GM12878 (cell line): ENCODE measurements at regions of chr3 and their contacts with region 1.

Region 1: GRCh38 chr3:114839476-114839875 is 307.6 kb downstream of the ZBTB20 start:
- DNase-seq: no peak
- ATAC-seq: no peak
- H3K4me3 ChIP-seq: no peak overlapping the region
- H3K27ac ChIP-seq: no peak overlapping the region
- H3K4me1 ChIP-seq: no peaks in the 10 kb centered on the region
- H3K27me3 ChIP-seq: no peaks in the 10 kb centered on the region
- CTCF ChIP-seq: no peak
- EP300 ChIP-seq: no peak
- POLR2A ChIP-seq: no peak
- RAD21 ChIP-seq: no peak

Region 2: GRCh38 chr3:114803042-114803695 is 36.3 kb before region 1 on chr3:
- CTCF ChIA-PET with region 1: no interaction called
- POLR2A ChIA-PET with region 1: no interaction called
- RAD21 ChIA-PET with region 1: no interaction called
- SMC1A ChIA-PET with region 1: no interaction called
- in situ Hi-C with region 1: no loop called
- intact Hi-C with region 1: no loop called
- DNase-seq: no peak
- ATAC-seq: no peak
- H3K4me3 ChIP-seq: no peak overlapping the region
- H3K27ac ChIP-seq: no peak overlapping the region
- H3K4me1 ChIP-seq: no peaks in the 10 kb centered on the region
- H3K27me3 ChIP-seq: no peaks in the 10 kb centered on the region
- CTCF ChIP-seq: no peak
- EP300 ChIP-seq: no peak
- POLR2A ChIP-seq: no peak
- RAD21 ChIP-seq: no peak

Region 3: GRCh38 chr3:115819785-115820384 is 980.4 kb after region 1 on chr3:
- CTCF ChIA-PET with region 1: no interaction called
- POLR2A ChIA-PET with region 1: no interaction called
- RAD21 ChIA-PET with region 1: no interaction called
- SMC1A ChIA-PET with region 1: no interaction called
- in situ Hi-C with region 1: loop called (anchors 25 kb)
- intact Hi-C with region 1: loop called (anchors 10 kb)
- DNase-seq: peak; percentile 45
- ATAC-seq: peak; percentile 96
- H3K4me3 ChIP-seq: no peak overlapping the region
- H3K27ac ChIP-seq: no peak overlapping the region
- H3K4me1 ChIP-seq: no peaks in the 10 kb centered on the region
- H3K27me3 ChIP-seq: no peaks in the 10 kb centered on the region
- CTCF ChIP-seq: peak; percentile 93 to 100 (median 99)
- EP300 ChIP-seq: no peak
- POLR2A ChIP-seq: no peak
- RAD21 ChIP-seq: peak; percentile 79